Activated T-helper 1 cell treated with anti-CD3 and anti-CD28 coated beads, Interleukin-12 subunit alpha, Interleukin-12 subunit beta, Interleukin-2, Interleukin-4 antibody, amounts not matched to agents 30 ng/mL and 10 ng/mL and 1 ng/mL, durations not matched to agents 14 hours and 24 hours and 36 hours (primary cell): ENCODE measurements at regions of chr10 and their contacts with region 1.

Region 1: DNA sequence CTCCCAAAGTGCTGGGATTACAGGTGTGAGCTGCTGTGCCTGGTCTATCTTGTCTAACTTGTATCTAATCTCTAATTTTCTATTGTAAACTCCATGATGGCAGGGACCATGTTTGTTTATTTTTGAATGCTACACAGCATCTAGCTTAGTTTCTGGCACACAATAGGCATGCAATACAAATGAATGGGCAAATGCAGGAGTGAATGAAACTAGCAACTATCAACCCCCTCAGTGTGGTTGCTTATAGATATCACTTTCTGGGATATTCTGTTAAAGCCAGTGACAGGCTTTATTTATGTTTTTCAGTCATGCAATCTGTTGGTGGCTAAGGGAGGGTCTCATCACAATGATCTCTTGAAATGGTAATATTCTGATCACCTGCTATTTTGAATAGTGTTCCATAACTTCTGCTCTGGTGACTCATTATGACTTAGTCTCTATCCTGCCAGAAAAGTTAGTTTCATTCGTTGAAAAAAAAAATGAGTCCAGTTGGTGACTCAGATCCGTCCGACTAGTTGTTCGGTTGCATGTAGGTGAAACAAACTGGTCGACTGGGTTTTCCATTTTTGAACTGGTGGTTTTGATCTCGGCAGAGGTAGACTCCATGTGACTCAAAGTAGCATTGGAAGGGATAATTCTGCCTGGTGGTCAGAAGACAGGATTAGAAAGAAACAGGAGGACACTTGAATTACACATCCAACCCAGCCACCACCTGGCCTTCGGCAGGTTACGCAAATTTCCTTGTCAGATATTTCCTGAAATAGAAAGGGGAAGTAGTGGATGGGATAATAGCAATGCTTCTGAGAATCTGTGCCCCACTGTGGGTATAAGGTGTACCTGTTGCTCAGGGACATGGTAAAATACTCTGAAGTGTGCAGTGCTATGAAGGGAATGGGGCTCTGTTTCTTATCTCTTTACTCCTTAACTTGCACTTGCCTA is 76.8 kb downstream of the GATA3 start:
- DNase-seq: peak; percentile 50
- H3K4me3 Mint-ChIP-seq: peak overlapping the region; percentile 61
- H3K27ac Mint-ChIP-seq: peak overlapping the region; percentile 90
- H3K4me1 Mint-ChIP-seq: peaks cover 62% of the 10 kb centered on the region
- H3K27me3 Mint-ChIP-seq: peaks cover 5% of the 10 kb centered on the region

Region 2: GRCh38 chr10:8088504-8088903 is 42.7 kb before region 1 on chr10:
- intact Hi-C with region 1: loop called (anchors 1 kb)
- DNase-seq: peak; percentile 37
- H3K4me3 Mint-ChIP-seq: no peak overlapping the region
- H3K27ac Mint-ChIP-seq: peak overlapping the region; percentile 44
- H3K4me1 Mint-ChIP-seq: peaks cover 50% of the 10 kb centered on the region
- H3K27me3 Mint-ChIP-seq: no peaks in the 10 kb centered on the region

Region 3: GRCh38 chr10:8112226-8112905 is 18.9 kb before region 1 on chr10:
- intact Hi-C with region 1: no loop called
- DNase-seq: no peak
- H3K4me3 Mint-ChIP-seq: no peak overlapping the region
- H3K27ac Mint-ChIP-seq: no peak overlapping the region
- H3K4me1 Mint-ChIP-seq: no peaks in the 10 kb centered on the region
- H3K27me3 Mint-ChIP-seq: peaks cover 11% of the 10 kb centered on the region

Region 4: GRCh38 chr10:8149991-8150390 is 18.7 kb after region 1 on chr10:
- intact Hi-C with region 1: loop called (anchors 2 kb)
- DNase-seq: no peak
- H3K4me3 Mint-ChIP-seq: no peak overlapping the region
- H3K27ac Mint-ChIP-seq: no peak overlapping the region
- H3K4me1 Mint-ChIP-seq: peaks cover 8% of the 10 kb centered on the region
- H3K27me3 Mint-ChIP-seq: peaks cover 23% of the 10 kb centered on the region

Region 5: DNA sequence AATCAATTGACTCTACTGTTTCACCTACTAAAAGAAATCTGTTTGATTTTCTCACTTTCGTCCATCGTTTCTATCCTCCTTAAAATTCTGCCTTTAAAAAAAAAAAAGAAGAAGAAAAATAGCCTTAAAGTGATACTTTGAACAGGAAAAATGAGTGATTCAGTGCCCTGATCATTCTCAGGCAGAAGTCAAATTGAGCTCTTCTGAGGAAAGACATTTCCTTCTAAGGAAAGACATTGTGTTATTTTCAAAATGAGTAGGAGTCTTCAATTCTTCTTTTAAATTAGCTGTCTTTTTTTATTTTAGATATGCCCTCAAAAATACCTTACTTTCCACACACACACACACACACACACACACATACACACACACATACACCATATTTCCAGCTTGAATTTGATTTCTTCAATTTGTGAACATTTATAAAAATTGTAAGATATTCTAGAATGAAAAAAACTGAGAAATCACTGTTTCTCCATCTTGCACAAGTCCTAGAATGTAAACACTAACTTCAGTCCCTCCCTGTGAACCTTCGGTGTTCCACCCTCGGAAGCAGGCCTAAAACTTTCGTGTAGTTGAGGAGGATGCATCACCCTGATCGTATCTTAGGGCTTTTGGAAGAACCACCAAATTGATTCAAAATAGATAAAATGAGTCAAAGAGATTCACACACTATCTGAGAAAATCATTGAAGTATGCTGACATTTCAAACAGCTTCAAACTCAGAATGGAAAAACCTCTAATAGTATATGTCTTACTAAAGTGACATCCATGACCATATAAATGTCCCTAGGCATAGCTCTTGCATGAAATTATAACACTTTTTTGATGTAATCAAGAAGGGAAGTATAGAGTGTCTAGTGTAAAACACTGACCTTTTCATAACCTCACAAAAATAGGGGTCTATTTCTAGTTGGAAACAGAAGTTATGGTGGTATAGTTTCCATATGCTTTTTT is 194.1 kb after region 1 on chr10:
- intact Hi-C with region 1: loop called (anchors 1 kb)
- DNase-seq: no peak
- H3K4me3 Mint-ChIP-seq: peak overlapping the region; percentile 63
- H3K27ac Mint-ChIP-seq: peak overlapping the region; percentile 85
- H3K4me1 Mint-ChIP-seq: peaks cover 57% of the 10 kb centered on the region
- H3K27me3 Mint-ChIP-seq: peaks cover 15% of the 10 kb centered on the region

Region 6: DNA sequence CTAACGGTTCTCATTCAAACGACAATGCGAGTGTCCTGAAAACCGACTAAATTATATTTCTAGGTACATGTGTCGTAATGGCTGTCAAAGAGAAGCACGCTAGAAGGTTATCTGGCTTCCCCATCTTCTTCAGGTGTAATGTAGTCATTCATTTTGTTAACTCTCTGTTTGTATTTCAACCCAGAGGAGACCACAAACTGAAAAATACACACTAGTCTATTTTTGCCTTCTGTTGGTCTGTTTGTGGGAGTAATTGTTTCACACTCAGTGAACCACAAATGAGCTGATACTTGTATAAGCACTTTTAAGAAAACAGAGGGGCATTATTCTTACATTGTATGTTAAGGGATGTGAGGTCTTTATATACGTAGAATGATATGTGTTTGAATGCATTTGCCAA is 229.1 kb after region 1 on chr10:
- intact Hi-C with region 1: loop called (anchors 1 kb)
- DNase-seq: no peak
- H3K4me3 Mint-ChIP-seq: peak overlapping the region; percentile 32
- H3K27ac Mint-ChIP-seq: peak overlapping the region; percentile 78
- H3K4me1 Mint-ChIP-seq: peaks cover 56% of the 10 kb centered on the region
- H3K27me3 Mint-ChIP-seq: peaks cover 9% of the 10 kb centered on the region

Region 7: GRCh38 chr10:9294865-9295264 is 1163.6 kb after region 1 on chr10:
- intact Hi-C with region 1: loop called (anchors 10 kb)
- DNase-seq: peak; percentile 8
- H3K4me3 Mint-ChIP-seq: peak overlapping the region; percentile 36
- H3K27ac Mint-ChIP-seq: peak overlapping the region; percentile 68
- H3K4me1 Mint-ChIP-seq: peaks cover 17% of the 10 kb centered on the region
- H3K27me3 Mint-ChIP-seq: peaks cover 3% of the 10 kb centered on the region